Heart left ventricle (tissue), 16 donors: ENCODE measurements at regions of chr14 and their contacts with region 1.

Region 1: DNA sequence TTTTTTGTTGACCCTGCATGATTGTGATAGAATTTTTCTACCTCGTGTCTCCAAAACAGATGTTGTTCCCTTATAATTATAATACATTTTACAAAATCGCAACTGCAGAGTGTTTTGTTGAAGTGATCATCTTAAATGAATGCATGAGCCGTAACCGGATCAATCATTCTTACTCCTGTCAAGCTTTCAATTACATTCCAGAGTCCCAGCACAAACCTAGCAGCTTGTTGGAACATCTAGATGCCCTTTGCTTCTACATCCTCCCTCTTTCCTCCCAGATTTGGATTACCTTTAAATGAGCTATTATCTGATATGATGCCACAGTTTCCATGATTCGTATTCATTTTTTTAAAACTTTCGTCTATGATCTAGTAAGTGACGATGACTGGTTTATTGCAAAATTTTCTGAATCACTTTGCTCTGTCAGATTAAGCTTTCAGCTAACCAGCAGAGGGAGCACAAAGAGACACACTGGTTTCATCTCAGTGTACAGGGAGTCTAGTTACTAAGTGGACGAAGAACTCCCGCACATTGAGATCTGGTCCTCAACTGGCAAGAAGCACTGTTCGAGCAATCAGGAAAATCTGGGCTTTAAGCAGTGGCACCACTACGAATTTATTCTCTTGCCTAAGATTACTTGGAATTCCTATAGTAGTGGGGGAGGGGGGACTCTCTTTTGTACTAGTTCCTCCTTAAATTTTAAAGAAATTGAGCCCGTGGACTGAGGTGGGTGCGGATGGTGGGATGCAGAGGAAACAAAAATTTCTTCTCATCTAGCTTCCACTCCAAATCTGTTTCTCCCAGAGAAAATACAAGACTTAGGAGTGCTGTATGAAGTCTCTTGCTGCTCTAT is 40.9 kb downstream of the TSHR start:
- DNase-seq: peak in 3 of 5 donors; percentile 24 to 32 (median 26)
- ATAC-seq: peak; percentile 78 to 95 (median 88)
- H3K4me3 ChIP-seq: no peak overlapping the region
- H3K27ac ChIP-seq: no peak overlapping the region
- H3K4me1 ChIP-seq: peaks cover 0 to 10% (median 0%) of the 10 kb centered on the region in 12 donors
- H3K27me3 ChIP-seq: peaks cover 0 to 12% (median 0%) of the 10 kb centered on the region in 9 donors
- CTCF ChIP-seq: peak; percentile 45 to 77 (median 61)
- POLR2A ChIP-seq: no peak

Region 2: DNA sequence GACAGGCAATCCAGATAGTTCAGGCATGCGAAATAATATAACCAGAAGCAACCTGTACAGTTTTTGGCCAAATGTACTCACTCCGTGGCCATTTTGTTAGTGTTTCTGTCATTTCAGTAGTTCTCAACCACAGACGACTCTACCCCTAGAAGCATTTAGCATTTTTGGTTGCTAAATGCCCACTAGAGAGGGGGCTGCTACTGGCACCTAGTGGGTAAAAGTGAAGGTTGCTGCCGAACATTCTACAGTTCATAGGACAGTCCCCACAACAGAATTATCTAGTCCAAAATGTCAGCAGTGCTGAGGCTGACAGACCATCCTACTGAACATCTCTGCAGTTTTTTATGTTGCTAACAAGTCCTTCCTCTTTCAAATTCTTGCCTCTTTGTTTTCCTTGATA is 66.5 kb after region 1 on chr14:
- intact Hi-C with region 1: loop called in 1 of 10 experiments (anchors 10 kb)
- DNase-seq: no peak
- ATAC-seq: no peak
- H3K4me3 ChIP-seq: no peak overlapping the region
- H3K27ac ChIP-seq: no peak overlapping the region
- H3K4me1 ChIP-seq: no peaks in the 10 kb centered on the region
- H3K27me3 ChIP-seq: no peaks in the 10 kb centered on the region
- CTCF ChIP-seq: peak in 9 of 12 donors; percentile 10 to 42 (median 26)
- POLR2A ChIP-seq: no peak

Region 3: DNA sequence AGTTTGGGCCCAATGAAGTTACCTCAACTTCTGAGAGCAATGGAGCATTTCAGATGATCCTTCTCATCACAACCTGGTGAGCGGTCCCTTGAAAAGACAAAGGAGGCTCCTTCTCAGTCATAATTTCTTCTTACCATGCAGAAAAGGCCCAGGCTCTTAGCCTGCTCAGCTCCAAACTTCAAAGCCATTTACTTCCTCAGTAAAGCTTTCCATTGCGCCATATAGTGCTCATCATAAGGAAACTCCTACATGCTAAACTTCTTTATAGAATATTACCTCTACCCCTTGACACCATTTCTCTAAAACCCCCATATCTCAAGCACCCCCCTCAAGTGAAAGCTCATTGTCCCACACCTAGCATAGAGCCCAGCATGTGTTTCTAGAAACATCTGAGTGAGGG is 97.4 kb after region 1 on chr14:
- intact Hi-C with region 1: no loop called
- DNase-seq: no peak
- ATAC-seq: no peak
- H3K4me3 ChIP-seq: no peak overlapping the region
- H3K27ac ChIP-seq: no peak overlapping the region
- H3K4me1 ChIP-seq: no peaks in the 10 kb centered on the region
- H3K27me3 ChIP-seq: no peaks in the 10 kb centered on the region
- CTCF ChIP-seq: no peak
- POLR2A ChIP-seq: no peak

Region 4: DNA sequence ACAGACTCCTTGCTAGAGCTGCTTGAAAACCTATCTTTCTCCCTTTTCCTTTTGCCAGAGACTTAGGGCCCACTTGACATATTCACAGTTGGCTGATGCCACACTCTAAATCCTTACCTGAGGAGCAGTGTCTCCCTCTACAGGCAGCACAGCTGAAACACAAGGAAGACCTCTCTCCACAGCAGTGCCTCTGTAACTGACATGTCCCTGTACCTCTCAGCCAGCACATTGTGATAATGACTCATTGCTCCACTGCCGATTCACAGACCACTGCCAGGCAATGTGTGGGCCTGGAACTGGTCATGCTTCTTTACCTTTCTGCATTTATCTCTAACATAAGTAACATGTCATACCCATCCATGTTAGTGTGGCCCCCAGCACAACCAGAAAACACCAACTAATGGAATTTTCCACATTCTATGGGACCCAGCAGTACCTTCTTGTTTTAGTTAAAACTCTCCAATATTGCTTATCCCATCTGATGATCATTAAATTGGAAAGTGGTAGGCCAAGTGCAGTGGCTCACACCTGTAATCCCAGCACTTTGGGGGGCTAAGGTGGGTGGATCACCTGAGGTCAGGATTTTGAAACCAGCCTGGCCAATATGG is 168.0 kb after region 1 on chr14:
- intact Hi-C with region 1: loop called in 5 of 10 experiments (anchors 5 to 10 kb)
- DNase-seq: peak in 4 of 5 donors; percentile 26 to 54 (median 32)
- ATAC-seq: peak; percentile 69 to 96 (median 91)
- H3K4me3 ChIP-seq: no peak overlapping the region
- H3K27ac ChIP-seq: no peak overlapping the region
- H3K4me1 ChIP-seq: peaks cover 0 to 10% (median under 1%) of the 10 kb centered on the region in 12 donors
- H3K27me3 ChIP-seq: no peaks in the 10 kb centered on the region
- CTCF ChIP-seq: peak in 11 of 12 donors; percentile 25 to 59 (median 39)
- POLR2A ChIP-seq: no peak

Region 5: DNA sequence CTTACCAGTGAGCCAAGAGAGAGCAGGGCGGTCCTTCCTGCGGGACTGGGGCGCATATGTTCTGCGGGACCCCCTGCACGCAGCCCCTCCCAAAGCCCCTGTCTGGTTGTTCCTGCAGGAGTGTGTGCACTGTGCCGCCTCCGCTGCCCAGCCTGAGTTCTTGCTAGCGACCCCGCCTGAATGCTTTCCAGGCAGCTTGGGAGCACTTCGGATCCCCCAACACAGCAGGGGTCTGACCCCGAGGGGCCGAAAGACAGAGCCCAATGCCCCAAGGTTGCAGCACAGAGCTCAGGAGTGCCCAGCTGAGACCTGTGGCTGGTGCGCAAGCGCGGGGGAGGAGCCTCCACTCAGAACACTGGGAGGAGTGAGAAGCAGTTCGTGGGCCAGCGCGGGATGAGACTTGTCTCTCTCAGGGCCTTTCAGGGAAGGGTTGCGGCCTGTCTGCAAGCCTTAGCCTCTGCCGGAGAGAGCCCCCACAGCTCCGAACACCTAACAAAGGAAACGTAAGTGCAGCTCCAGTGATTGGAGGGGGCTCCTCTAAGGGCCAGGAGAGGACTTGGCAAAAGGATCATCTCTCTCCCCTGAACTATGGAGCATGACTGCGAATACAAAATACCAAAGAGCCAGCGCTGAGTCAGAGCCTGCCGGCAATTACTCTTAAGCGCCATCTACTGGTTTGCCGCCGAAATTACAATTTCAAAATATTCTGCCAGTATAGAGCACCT is 174.0 kb after region 1 on chr14:
- intact Hi-C with region 1: loop called in 7 of 10 experiments (anchors 1 to 10 kb)
- DNase-seq: peak; percentile 92 to 97 (median 96)
- ATAC-seq: peak; percentile 99 to 100 (median 100)
- H3K4me3 ChIP-seq: peak overlapping the region; percentile 57 to 87 (median 72)
- H3K27ac ChIP-seq: peak overlapping the region; percentile 82 to 97 (median 93)
- H3K4me1 ChIP-seq: peaks cover 0 to 19% (median 8%) of the 10 kb centered on the region in 12 donors
- H3K27me3 ChIP-seq: no peaks in the 10 kb centered on the region
- CTCF ChIP-seq: peak; percentile 82 to 95 (median 90)
- POLR2A ChIP-seq: peak in 1 of 2 donors; percentile 68

Region 6: DNA sequence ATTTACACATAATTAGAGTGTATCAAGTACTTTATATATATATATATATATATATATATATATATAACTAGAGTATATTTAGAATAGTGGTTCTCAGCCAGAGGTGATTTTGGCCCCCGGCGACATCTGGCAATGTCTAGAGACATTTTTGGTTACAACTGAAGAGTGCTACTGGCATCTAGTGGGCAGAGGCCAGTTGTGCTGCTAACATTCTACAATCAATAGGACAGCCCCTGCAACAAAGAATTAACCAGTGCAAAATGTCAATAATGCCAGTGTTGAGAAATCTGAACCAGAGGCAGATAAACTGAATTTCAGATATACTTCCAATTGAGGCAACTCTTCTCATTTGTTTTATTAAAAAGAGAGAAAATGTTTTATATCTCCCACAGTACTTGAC is 215.6 kb after region 1 on chr14:
- intact Hi-C with region 1: loop called in 4 of 10 experiments (anchors 5 kb)
- DNase-seq: peak in 3 of 5 donors; percentile 21 to 72 (median 50)
- ATAC-seq: peak in 3 of 4 donors; percentile 84 to 86 (median 85)
- H3K4me3 ChIP-seq: no peak overlapping the region
- H3K27ac ChIP-seq: no peak overlapping the region
- H3K4me1 ChIP-seq: peaks cover 0 to 33% (median 15%) of the 10 kb centered on the region in 12 donors
- H3K27me3 ChIP-seq: no peaks in the 10 kb centered on the region
- CTCF ChIP-seq: peak in 11 of 12 donors; percentile 29 to 58 (median 43)
- POLR2A ChIP-seq: no peak

Region 7: GRCh38 chr14:81464247-81465002 is 468.1 kb after region 1 on chr14:
- intact Hi-C with region 1: loop called in 2 of 10 experiments (anchors 5 kb)
- DNase-seq: peak in 2 of 5 donors; percentile 35 to 53
- ATAC-seq: peak in 3 of 4 donors; percentile 38 to 58 (median 53)
- H3K4me3 ChIP-seq: peak overlapping the region in 11 of 12 donors; percentile 32 to 64 (median 49)
- H3K27ac ChIP-seq: peak overlapping the region in 5 of 12 donors; percentile 13 to 76 (median 23)
- H3K4me1 ChIP-seq: peaks cover 0 to 7% (median 0%) of the 10 kb centered on the region in 12 donors
- H3K27me3 ChIP-seq: no peaks in the 10 kb centered on the region
- CTCF ChIP-seq: peak; percentile 84 to 94 (median 92)
- POLR2A ChIP-seq: no peak